HepG2 (cell line): ENCODE measurements at regions of chr7 and their contacts with region 1.

Region 1: DNA sequence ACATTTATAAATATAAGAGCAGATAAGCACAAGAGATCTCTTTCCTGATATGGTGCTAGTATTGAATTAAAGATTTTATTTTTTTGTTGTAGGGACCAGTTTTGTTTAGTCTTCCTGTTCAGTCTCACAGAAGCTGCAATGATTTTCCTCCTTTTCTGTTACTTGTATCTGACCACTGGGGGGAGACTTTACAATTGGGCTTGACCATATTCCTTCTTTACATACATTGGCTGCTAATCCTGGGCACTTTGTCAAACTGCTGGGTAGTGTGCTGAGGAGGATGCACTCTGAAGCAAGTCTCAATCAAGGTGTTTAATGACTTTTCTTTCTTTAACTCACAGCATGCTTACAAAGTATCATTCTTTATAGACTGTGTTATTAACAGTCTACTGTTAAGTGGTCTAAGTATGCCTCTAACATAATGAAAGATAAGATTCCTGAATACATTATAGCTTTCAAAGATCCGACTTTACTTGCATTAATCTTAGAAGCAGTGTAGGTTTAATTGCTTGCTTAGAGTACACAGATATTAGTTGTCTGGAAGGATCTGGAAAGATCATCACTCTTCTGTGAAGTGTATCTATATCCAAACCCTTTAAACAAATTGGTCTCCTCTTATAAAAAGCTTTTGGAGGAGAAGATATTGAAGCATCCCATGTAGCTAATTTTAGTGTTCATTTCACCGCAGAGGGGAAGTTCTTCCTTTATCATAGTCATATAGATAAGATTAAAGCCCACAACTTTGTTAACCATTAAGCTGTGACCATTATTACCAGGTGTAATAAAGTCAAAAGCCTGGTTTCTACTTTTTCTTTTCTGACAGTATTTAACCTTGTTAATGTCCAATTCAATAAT is 3.1 kb downstream of the PALS2 start:
- DNase-seq: peak; percentile 56
- ATAC-seq: peak; percentile 21; the same call in 1 of the 3 replicates
- H3K4me3 ChIP-seq: no peak overlapping the region
- H3K27ac ChIP-seq: no peak overlapping the region
- H3K4me1 ChIP-seq: peaks cover 36% of the 10 kb centered on the region
- H3K27me3 ChIP-seq: peaks cover 0 to 14% of the 10 kb centered on the region in 2 experiments; a peak in 4 of 5 replicates
- CTCF ChIP-seq: peak; percentile 75
- EP300 ChIP-seq: no peak
- POLR2A ChIP-seq: no peak
- RAD21 ChIP-seq: 0 out of 2 replicates have a peak, but pooled peaks have one; percentile 24

Region 2: GRCh38 chr7:24545215-24545614 is 31.2 kb before region 1 on chr7:
- CTCF ChIA-PET with region 1: no interaction called
- POLR2A ChIA-PET with region 1: no interaction called
- in situ Hi-C with region 1: no loop called
- intact Hi-C with region 1: no loop called
- DNase-seq: no peak
- ATAC-seq: no peak
- H3K4me3 ChIP-seq: no peak overlapping the region
- H3K27ac ChIP-seq: no peak overlapping the region
- H3K4me1 ChIP-seq: no peaks in the 10 kb centered on the region
- H3K27me3 ChIP-seq: no peaks in the 10 kb centered on the region
- CTCF ChIP-seq: no peak
- EP300 ChIP-seq: no peak
- POLR2A ChIP-seq: no peak
- RAD21 ChIP-seq: no peak

Region 3: DNA sequence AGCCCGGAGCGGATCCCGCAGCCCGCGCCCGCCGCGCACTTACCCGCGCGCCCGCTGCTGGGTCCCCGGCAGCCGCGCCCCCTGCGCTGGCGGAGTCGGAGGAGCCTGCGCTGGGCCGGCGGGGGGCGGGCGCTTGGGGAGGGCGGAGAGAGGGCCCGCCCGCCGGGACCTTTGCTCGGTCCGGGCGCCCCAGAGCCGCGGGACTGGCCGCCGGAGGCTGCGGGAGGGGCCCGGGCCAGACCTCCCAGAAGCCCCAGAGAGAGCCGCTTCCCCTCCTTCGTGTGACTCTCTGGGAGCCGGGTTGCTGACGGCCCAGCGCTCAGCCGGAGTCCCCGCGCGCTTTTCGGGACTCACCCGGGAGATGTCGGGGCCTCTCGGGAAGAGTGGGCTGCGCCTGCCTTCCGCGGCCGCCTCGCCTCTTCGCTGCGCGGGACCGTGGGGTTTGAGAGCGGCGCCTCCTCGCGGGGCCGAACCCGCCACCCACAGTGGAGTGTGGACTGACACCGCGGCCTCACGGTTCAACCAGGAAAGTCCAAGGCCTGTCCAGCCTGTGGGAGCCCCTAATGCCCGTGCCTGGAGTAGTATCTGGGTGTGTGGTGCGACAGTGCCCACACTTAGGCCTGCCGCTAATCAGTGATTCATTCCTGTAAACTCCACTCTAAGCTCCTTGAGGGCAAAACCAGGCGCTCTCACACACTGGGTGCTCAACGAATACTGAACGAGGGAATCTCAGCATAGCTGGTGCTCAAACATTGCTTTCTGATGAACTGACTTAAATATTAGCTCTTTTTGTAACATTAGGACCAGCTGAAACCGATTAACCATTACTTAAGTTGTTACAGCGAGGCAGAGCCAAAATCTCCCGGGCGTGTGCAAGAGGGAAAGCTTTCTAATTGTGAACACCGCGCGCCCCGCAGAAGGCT is 181.2 kb after region 1 on chr7 and contains the start of gene GSDME:
- CTCF ChIA-PET with region 1: no interaction called
- POLR2A ChIA-PET with region 1: no interaction called
- in situ Hi-C with region 1: no loop called
- intact Hi-C with region 1: loop called (anchors 5 kb)
- DNase-seq: peak; percentile 58
- ATAC-seq: peak; percentile 95
- H3K4me3 ChIP-seq: peak within 1 kb of the TSS; percentile 80 to 81 (median 81)
- H3K27ac ChIP-seq: peak within 1 kb of the TSS; percentile 78
- H3K4me1 ChIP-seq: peaks cover 34% of the 10 kb centered on the region
- H3K27me3 ChIP-seq: no peaks in the 10 kb centered on the region
- CTCF ChIP-seq: peak; percentile 21; the same call in 1 of the 2 replicates
- EP300 ChIP-seq: no peak
- POLR2A ChIP-seq: peak; percentile 67 to 69
- RAD21 ChIP-seq: peak; percentile 14; the same call in 1 of the 2 replicates
- total RNA-seq, gene GSDME: 19.2 and 30.0 TPM in 2 replicates

Region 4: GRCh38 chr7:25223206-25223605 is 646.8 kb after region 1 on chr7:
- CTCF ChIA-PET with region 1: no interaction called
- POLR2A ChIA-PET with region 1: no interaction called
- in situ Hi-C with region 1: no loop called
- intact Hi-C with region 1: loop called (anchors 5 kb)
- DNase-seq: no peak
- ATAC-seq: no peak
- H3K4me3 ChIP-seq: no peak overlapping the region
- H3K27ac ChIP-seq: no peak overlapping the region
- H3K4me1 ChIP-seq: no peaks in the 10 kb centered on the region
- H3K27me3 ChIP-seq: peaks cover 0 to 33% of the 10 kb centered on the region in 2 experiments; a peak in 3 of 5 replicates
- CTCF ChIP-seq: no peak
- EP300 ChIP-seq: no peak
- POLR2A ChIP-seq: no peak
- RAD21 ChIP-seq: no peak